IMR-90 (cell line): ENCODE measurements at regions of chr15 and their contacts with region 1.

Region 1: GRCh38 chr15:95259513-95259912 is 1028.2 kb downstream of the MCTP2 start:
- DNase-seq: peak; percentile 83
- ATAC-seq: peak; percentile 70
- H3K4me3 ChIP-seq: no peak overlapping the region
- H3K27ac ChIP-seq: no peak overlapping the region
- H3K4me1 ChIP-seq: peaks cover 17% of the 10 kb centered on the region
- H3K27me3 ChIP-seq: no peaks in the 10 kb centered on the region
- CTCF ChIP-seq: peak; percentile 86
- POLR2A ChIP-seq: no peak; the same call in 1 of the 2 replicates
- RAD21 ChIP-seq: peak; percentile 98

Region 2: GRCh38 chr15:95226850-95227634 is 32.5 kb before region 1 on chr15:
- CTCF ChIA-PET with region 1: no interaction called
- POLR2A ChIA-PET with region 1: no interaction called
- dilution Hi-C with region 1: no loop called
- in situ Hi-C with region 1: no loop called
- intact Hi-C with region 1: no loop called
- DNase-seq: no peak
- ATAC-seq: no peak
- H3K4me3 ChIP-seq: no peak overlapping the region
- H3K27ac ChIP-seq: no peak overlapping the region
- H3K4me1 ChIP-seq: no peaks in the 10 kb centered on the region
- H3K27me3 ChIP-seq: no peaks in the 10 kb centered on the region; the same call in 1 of the 2 replicates
- CTCF ChIP-seq: no peak
- POLR2A ChIP-seq: no peak
- RAD21 ChIP-seq: no peak

Region 3: GRCh38 chr15:95291898-95292472 is 32.5 kb after region 1 on chr15:
- CTCF ChIA-PET with region 1: interaction called, 3 read pairs
- POLR2A ChIA-PET with region 1: interaction called, 7 read pairs
- dilution Hi-C with region 1: no loop called
- in situ Hi-C with region 1: no loop called
- intact Hi-C with region 1: loop called (anchors 5 kb)
- DNase-seq: peak; percentile 56
- ATAC-seq: no peak
- H3K4me3 ChIP-seq: no peak overlapping the region
- H3K27ac ChIP-seq: no peak overlapping the region
- H3K4me1 ChIP-seq: peaks cover 15% of the 10 kb centered on the region
- H3K27me3 ChIP-seq: no peaks in the 10 kb centered on the region
- CTCF ChIP-seq: peak; percentile 59
- POLR2A ChIP-seq: no peak
- RAD21 ChIP-seq: peak; percentile 52

Region 4: DNA sequence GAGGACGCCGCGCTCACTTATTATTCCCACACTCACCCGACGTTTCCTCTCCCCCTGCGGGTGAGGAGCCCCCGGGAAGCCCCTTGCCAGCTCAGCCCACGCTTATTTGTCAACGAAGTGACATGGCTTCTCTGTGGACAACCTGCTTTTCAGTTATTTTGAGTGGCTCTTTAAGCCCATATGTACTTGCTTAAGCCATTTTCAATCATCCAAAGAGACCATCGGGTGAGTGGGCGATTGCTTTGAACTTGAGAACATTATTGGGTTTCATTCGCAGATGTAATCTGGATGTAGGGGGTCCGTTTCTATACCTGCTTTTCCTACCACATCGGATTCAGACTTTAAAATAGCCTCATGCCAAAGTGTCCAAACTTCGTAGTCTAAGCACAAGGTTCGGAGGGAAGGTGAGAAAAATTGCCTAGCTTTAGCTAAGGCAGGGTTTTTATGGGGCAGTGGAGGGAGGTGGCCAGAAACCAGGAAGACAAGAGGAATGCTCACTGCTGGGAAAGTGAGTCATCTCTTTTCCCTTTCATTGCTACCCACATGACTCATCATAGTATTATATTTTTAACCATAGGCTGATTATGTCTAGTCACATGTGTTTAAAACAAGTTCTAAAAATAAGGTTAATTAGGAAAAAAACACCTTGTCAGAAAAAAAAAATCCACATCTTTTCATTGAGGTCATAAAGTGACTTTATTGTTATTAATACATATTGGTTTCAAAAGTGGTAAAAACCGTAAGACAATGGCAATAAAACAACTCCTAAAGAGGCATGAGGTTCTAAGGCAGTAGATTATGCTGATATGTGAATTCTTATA is 297.9 kb after region 1 on chr15:
- CTCF ChIA-PET with region 1: interaction called, 5 read pairs
- POLR2A ChIA-PET with region 1: no interaction called
- dilution Hi-C with region 1: no loop called
- in situ Hi-C with region 1: no loop called
- intact Hi-C with region 1: loop called (anchors 10 kb)
- DNase-seq: peak; percentile 95
- ATAC-seq: peak; percentile 83
- H3K4me3 ChIP-seq: no peak overlapping the region
- H3K27ac ChIP-seq: peak overlapping the region; percentile 70
- H3K4me1 ChIP-seq: peaks cover 13% of the 10 kb centered on the region
- H3K27me3 ChIP-seq: no peaks in the 10 kb centered on the region
- CTCF ChIP-seq: no peak
- POLR2A ChIP-seq: 0 out of 2 replicates have a peak, but pooled peaks have one; percentile 24
- RAD21 ChIP-seq: no peak

Region 5: GRCh38 chr15:96047255-96047931 is 787.9 kb after region 1 on chr15:
- CTCF ChIA-PET with region 1: no interaction called
- POLR2A ChIA-PET with region 1: no interaction called
- dilution Hi-C with region 1: no loop called
- in situ Hi-C with region 1: no loop called
- intact Hi-C with region 1: loop called (anchors 10 kb)
- DNase-seq: peak; percentile 98
- ATAC-seq: peak; percentile 88
- H3K4me3 ChIP-seq: peak overlapping the region; percentile 4; the same call in 1 of the 2 replicates
- H3K27ac ChIP-seq: peak overlapping the region; percentile 13; the same call in 1 of the 2 replicates
- H3K4me1 ChIP-seq: peaks cover 3% of the 10 kb centered on the region
- H3K27me3 ChIP-seq: no peaks in the 10 kb centered on the region
- CTCF ChIP-seq: no peak; the same call in 1 of the 2 replicates
- POLR2A ChIP-seq: peak; percentile 46; the same call in 1 of the 2 replicates
- RAD21 ChIP-seq: peak; percentile 20; the same call in 1 of the 2 replicates

Region 6: DNA sequence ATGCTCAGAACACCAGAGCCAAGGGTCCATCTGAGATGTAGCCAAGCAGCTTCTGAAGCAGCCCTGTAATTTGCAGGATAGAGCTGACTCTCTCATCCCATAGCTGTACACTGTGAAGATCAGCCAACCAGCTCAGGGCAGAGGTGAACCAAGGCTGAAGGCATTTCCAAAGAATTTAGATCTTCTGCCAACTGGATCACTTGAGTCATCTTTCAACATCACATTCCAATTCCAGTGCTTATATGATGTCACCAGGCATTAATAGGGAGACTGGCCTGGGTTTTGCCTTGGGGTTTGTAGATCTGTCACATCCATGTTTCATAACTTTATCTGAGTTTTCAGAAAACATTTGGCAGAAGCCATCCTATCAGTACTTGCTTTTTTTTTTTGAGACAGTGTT is 1169.2 kb after region 1 on chr15:
- CTCF ChIA-PET with region 1: no interaction called
- POLR2A ChIA-PET with region 1: no interaction called
- dilution Hi-C with region 1: no loop called
- in situ Hi-C with region 1: no loop called
- intact Hi-C with region 1: loop called (anchors 10 kb)
- DNase-seq: peak; percentile 96
- ATAC-seq: peak; percentile 100
- H3K4me3 ChIP-seq: no peak overlapping the region
- H3K27ac ChIP-seq: no peak overlapping the region
- H3K4me1 ChIP-seq: no peaks in the 10 kb centered on the region
- H3K27me3 ChIP-seq: peaks cover 15% of the 10 kb centered on the region
- CTCF ChIP-seq: no peak
- POLR2A ChIP-seq: no peak
- RAD21 ChIP-seq: no peak